A549 (cell line): ENCODE measurements at regions of chr6 and their contacts with region 1.

Region 1: GRCh38 chr6:10954590-10955010 is 67.7 kb downstream of the SYCP2L start:
- DNase-seq: peak; percentile 30 to 76
- ATAC-seq: peak; percentile 82 to 93; a peak in 5 of 6 replicates
- H3K4me3 ChIP-seq: no peak overlapping the region
- H3K27ac ChIP-seq: no peak overlapping the region
- H3K4me1 ChIP-seq: peaks cover 6% of the 10 kb centered on the region
- CTCF ChIP-seq: peak; percentile 53
- EP300 ChIP-seq: no peak
- POLR2A ChIP-seq: no peak
- RAD21 ChIP-seq: peak; percentile 47 to 62

Region 2: GRCh38 chr6:10451828-10452509 is 502.6 kb before region 1 on chr6:
- CTCF ChIA-PET with region 1: no interaction called
- POLR2A ChIA-PET with region 1: no interaction called
- DNase-seq: peak; percentile 81 to 98
- ATAC-seq: peak; percentile 98 to 100
- H3K4me3 ChIP-seq: no peak overlapping the region
- H3K27ac ChIP-seq: peak overlapping the region; percentile 88 to 99
- H3K4me1 ChIP-seq: peaks cover 35% of the 10 kb centered on the region
- CTCF ChIP-seq: no peak
- EP300 ChIP-seq: peak; percentile 66 to 82; a peak in 3 of 5 replicates
- POLR2A ChIP-seq: no peak
- RAD21 ChIP-seq: peak in 1 of 2 experiments; percentile 24; a peak in 1 of 5 replicates

Region 3: GRCh38 chr6:10771371-10771894 is 183.2 kb before region 1 on chr6:
- CTCF ChIA-PET with region 1: no interaction called
- POLR2A ChIA-PET with region 1: no interaction called
- DNase-seq: no peak
- ATAC-seq: no peak
- H3K4me3 ChIP-seq: no peak overlapping the region
- H3K27ac ChIP-seq: no peak overlapping the region
- H3K4me1 ChIP-seq: no peaks in the 10 kb centered on the region
- CTCF ChIP-seq: no peak
- EP300 ChIP-seq: no peak
- POLR2A ChIP-seq: no peak
- RAD21 ChIP-seq: no peak

Region 4: GRCh38 chr6:11064836-11065235 is 110.2 kb after region 1 on chr6:
- CTCF ChIA-PET with region 1: interaction called, 40 read pairs
- POLR2A ChIA-PET with region 1: interaction called, 3 read pairs
- DNase-seq: no peak
- ATAC-seq: no peak
- H3K4me3 ChIP-seq: no peak overlapping the region
- H3K27ac ChIP-seq: no peak overlapping the region
- H3K4me1 ChIP-seq: peaks cover 3% of the 10 kb centered on the region; the same call in 1 of the 3 replicates
- CTCF ChIP-seq: no peak
- EP300 ChIP-seq: no peak
- POLR2A ChIP-seq: no peak
- RAD21 ChIP-seq: no peak